HepG2 (cell line): ENCODE measurements at regions of chr19 and their contacts with region 1.

Region 1: DNA sequence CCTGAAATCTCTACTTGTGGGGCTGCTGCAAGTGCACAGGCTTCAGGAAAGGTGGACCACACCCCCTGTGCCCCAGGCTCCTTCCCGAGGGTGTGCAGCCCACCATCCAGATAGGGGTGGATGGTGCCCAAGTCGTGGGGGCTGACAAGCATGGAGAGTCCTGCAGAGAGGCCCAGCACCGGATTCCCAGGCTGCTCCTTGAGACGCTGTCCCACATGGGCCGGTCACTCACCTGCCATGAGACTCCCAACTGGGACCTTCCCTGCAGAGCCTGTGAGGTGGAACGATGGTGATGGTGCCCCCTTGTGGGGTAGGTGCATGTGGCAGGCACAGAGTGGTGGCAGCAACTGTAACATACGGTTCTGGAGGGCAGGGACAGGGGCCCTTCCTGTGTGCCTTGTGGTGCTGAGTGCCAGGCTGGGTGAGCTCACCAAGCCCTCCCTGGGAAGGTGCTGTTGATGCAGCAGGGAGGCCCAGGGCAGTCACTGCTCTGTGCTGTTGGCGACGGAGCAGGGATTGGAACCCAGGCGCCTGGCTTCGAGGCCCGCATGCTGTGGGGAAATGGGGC is 33.0 kb downstream of the PPP1R37 start:
- DNase-seq: peak; percentile 65
- ATAC-seq: peak; percentile 84
- H3K4me3 ChIP-seq: no peak overlapping the region
- H3K27ac ChIP-seq: no peak overlapping the region
- H3K4me1 ChIP-seq: peaks cover 30% of the 10 kb centered on the region
- H3K27me3 ChIP-seq: no peaks in the 10 kb centered on the region
- CTCF ChIP-seq: peak; percentile 96
- EP300 ChIP-seq: no peak
- POLR2A ChIP-seq: no peak
- RAD21 ChIP-seq: peak; percentile 87

Region 2: DNA sequence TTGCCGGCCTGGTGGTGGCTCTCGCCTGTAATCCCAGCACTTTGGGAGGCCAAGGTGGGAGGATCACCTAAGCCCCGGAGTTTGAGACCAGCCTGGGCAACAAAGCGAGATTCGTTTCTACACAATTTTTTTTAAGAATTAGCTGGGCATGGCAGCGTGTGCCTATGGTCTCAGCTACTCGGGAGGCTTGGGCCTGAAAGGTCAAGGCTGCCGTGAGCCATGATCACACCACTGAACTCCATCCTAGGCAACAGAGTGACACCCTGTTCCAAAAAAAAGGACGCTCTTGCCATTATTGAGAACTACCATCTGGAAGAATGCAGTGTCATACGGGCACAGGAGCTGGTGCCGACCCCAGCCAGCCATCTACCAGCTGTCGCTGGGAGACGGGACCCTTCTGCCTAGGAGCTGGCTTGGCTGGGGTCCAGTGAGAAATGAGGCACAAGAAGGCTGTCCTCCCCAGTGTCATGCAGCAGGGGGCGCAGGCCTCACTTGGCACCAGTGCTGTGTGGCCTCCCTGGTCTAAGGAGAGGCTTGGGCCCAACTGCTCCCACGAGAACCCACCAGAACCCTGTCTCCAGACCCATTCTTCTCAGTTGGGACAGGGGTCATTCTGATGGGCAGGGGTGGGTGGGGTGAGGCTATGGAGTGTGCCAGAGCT is 137.0 kb before region 1 on chr19:
- CTCF ChIA-PET with region 1: no interaction called
- POLR2A ChIA-PET with region 1: no interaction called
- in situ Hi-C with region 1: no loop called
- intact Hi-C with region 1: no loop called
- DNase-seq: peak; percentile 52
- ATAC-seq: peak; percentile 72
- H3K4me3 ChIP-seq: no peak overlapping the region
- H3K27ac ChIP-seq: no peak overlapping the region
- H3K4me1 ChIP-seq: no peaks in the 10 kb centered on the region
- H3K27me3 ChIP-seq: no peaks in the 10 kb centered on the region
- CTCF ChIP-seq: peak; percentile 83
- EP300 ChIP-seq: no peak
- POLR2A ChIP-seq: no peak
- RAD21 ChIP-seq: peak; percentile 58; the same call in 1 of the 2 replicates

Region 3: GRCh38 chr19:45016388-45017319 is 109.4 kb before region 1 on chr19:
- CTCF ChIA-PET with region 1: interaction called, 8 read pairs
- POLR2A ChIA-PET with region 1: no interaction called
- in situ Hi-C with region 1: loop called (anchors 10 kb)
- intact Hi-C with region 1: loop called (anchors 5 kb)
- DNase-seq: peak; percentile 78
- ATAC-seq: peak; percentile 96
- H3K4me3 ChIP-seq: no peak overlapping the region
- H3K27ac ChIP-seq: no peak overlapping the region
- H3K4me1 ChIP-seq: 0 out of 2 replicates have a peak, but pooled peaks cover 9% of the 10 kb centered on the region
- H3K27me3 ChIP-seq: no peaks in the 10 kb centered on the region
- CTCF ChIP-seq: peak; percentile 86
- EP300 ChIP-seq: no peak
- POLR2A ChIP-seq: no peak
- RAD21 ChIP-seq: peak; percentile 90

Region 4: DNA sequence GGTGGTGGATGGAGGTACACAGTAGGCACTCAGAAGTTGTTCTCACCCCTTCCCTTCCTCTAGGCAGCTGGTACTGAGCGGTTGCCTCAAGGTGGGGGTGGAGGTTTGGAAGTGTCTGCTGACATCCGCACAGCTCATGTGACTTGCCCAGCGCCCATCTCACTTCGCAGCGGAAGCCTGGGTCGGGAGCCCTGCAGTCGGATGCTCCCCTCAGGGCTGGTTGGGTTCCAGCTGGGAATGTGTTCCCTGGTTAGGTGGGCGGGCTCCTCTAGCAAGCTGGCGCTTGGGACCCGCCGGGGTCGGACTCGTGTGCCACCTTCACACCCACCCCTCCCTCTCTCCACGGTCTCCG is 22.9 kb before region 1 on chr19:
- CTCF ChIA-PET with region 1: interaction called, 3 read pairs
- POLR2A ChIA-PET with region 1: interaction called, 5 read pairs
- in situ Hi-C with region 1: no loop called
- intact Hi-C with region 1: loop called (anchors 1 kb)
- DNase-seq: no peak
- ATAC-seq: peak; percentile 1; the same call in 2 of the 3 replicates
- H3K4me3 ChIP-seq: peak overlapping the region; percentile 51 to 65 (median 55); a peak in 5 of 6 replicates
- H3K27ac ChIP-seq: peak overlapping the region; percentile 75
- H3K4me1 ChIP-seq: peaks cover 77% of the 10 kb centered on the region
- H3K27me3 ChIP-seq: no peaks in the 10 kb centered on the region
- CTCF ChIP-seq: no peak
- EP300 ChIP-seq: no peak
- POLR2A ChIP-seq: no peak
- RAD21 ChIP-seq: no peak

Region 5: GRCh38 chr19:45234089-45234869 is 108.3 kb after region 1 on chr19:
- CTCF ChIA-PET with region 1: no interaction called
- POLR2A ChIA-PET with region 1: no interaction called
- in situ Hi-C with region 1: no loop called
- intact Hi-C with region 1: no loop called
- DNase-seq: no peak
- ATAC-seq: peak; percentile 27; the same call in 2 of the 3 replicates
- H3K4me3 ChIP-seq: no peak overlapping the region; a peak in 1 of 6 replicates
- H3K27ac ChIP-seq: no peak overlapping the region
- H3K4me1 ChIP-seq: no peaks in the 10 kb centered on the region
- H3K27me3 ChIP-seq: peaks cover 4 to 30% of the 10 kb centered on the region in 2 experiments
- CTCF ChIP-seq: no peak
- EP300 ChIP-seq: no peak
- POLR2A ChIP-seq: no peak
- RAD21 ChIP-seq: no peak